ENCODE measurements at regions of chr12 and their contacts with region 1.

Region 1: DNA sequence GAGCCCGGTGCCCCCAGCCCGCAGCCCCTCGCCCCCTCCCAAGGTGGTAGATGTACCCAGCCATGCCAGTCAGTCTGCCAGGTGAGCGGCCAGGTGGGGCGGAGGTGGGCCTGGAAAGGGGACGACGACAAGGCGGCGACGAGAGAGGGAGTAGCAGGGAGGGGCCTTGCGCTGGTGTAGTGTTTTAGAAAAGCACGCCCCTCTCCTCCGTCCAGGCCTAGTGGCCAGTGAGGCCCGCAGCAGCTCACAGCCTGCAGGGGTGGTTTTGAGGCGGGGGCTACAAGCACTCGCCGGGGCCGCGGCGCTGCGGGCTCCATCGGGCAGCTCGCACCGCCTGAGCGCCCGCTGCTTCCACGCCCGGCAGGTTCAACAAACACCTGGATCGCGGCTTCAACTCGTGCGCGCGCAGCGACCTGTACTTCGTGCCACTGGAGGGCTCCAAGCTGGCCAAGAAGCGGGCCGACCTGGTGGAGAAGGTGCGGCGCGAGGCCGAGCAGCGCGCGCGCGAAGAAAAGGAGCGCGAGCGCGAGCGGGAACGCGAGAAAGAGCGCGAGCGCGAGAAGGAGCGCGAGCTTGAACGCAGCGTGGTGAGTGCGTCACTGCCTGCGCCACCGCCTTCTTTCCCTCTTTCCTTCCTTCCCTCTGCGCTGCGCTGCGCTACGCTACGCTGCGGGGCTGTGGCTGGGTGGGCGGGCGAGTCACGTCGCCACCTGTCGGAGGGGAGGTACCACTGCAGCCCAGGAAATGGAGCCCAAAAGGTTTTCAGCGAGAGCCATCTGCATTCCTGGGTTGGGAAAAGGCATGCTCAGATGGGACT is 5.9 kb upstream of the RNU7-1 start:
- DNase-seq: peak; percentile 96
- ATAC-seq: peak; percentile 88
- H3K4me3 Mint-ChIP-seq: peak overlapping the region; percentile 83
- H3K27ac Mint-ChIP-seq: peak overlapping the region; percentile 98
- H3K4me1 Mint-ChIP-seq: peaks cover 54% of the 10 kb centered on the region
- H3K27me3 Mint-ChIP-seq: no peaks in the 10 kb centered on the region
- CTCF ChIP-seq: peak; percentile 89

Region 2: GRCh38 chr12:6778574-6779550 is 158.8 kb before region 1 on chr12:
- CTCF ChIA-PET with region 1: no interaction called
- POLR2A ChIA-PET with region 1: no interaction called
- intact Hi-C with region 1: no loop called
- DNase-seq: peak; percentile 96
- ATAC-seq: peak; percentile 54
- H3K4me3 Mint-ChIP-seq: peak overlapping the region; percentile 89
- H3K27ac Mint-ChIP-seq: peak overlapping the region; percentile 89
- H3K4me1 Mint-ChIP-seq: peaks cover 83% of the 10 kb centered on the region
- H3K27me3 Mint-ChIP-seq: no peaks in the 10 kb centered on the region
- CTCF ChIP-seq: peak; percentile 89

Region 3: DNA sequence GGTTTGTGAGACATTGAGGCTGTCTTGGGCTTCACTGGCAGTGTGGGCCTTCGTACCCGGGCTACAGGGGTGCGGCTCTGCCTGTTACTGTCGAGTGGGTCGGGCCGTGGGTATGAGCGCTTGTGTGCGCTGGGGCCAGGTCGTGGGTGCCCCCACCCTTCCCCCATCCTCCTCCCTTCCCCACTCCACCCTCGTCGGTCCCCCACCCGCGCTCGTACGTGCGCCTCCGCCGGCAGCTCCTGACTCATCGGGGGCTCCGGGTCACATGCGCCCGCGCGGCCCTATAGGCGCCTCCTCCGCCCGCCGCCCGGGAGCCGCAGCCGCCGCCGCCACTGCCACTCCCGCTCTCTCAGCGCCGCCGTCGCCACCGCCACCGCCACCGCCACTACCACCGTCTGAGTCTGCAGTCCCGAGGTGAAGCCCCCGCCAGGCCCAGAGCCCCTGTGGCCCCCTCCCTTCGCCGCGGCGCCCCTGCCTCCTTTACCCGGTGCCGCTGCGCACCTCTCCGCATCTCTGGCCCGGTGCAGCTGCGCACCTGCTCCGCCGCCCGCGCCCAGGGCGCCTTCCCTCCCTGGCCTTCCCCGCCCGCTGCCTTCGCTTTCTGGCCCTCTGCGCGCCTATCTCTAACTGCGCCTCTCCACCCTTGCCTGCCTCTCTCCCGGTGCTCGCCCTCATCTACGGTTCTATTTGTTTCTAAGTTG is 23.3 kb before region 1 on chr12 and contains the start of gene ENO2:
- CTCF ChIA-PET with region 1: interaction called, 6 read pairs
- POLR2A ChIA-PET with region 1: interaction called, 62 read pairs
- intact Hi-C with region 1: no loop called
- DNase-seq: peak; percentile 88
- ATAC-seq: peak; percentile 91
- H3K4me3 Mint-ChIP-seq: peak within 1 kb of the TSS; percentile 95
- H3K27ac Mint-ChIP-seq: peak within 1 kb of the TSS; percentile 90
- H3K4me1 Mint-ChIP-seq: peaks cover 35% of the 10 kb centered on the region
- H3K27me3 Mint-ChIP-seq: no peaks in the 10 kb centered on the region
- CTCF ChIP-seq: no peak
- total RNA-seq, gene ENO2: 315 to 330 TPM

Region 4: DNA sequence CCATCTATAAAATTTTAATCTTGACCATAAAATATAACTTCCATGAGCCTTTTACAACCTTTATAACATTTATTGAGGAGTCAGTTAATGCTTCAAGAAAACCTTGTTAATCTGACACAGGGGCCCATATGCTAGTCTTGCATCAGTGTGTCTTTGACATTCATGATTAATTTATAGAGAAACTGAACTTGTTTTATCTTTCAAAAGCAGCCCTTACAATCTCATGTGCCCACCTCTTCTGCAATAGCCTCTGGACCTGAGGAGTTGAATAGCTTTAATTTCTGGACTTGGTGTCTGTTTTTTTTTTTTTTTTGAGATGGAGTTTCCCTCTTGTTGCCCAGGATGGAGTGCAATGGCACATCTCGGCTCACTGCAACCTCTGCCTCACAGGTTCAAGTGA is 89.2 kb after region 1 on chr12:
- CTCF ChIA-PET with region 1: no interaction called
- POLR2A ChIA-PET with region 1: no interaction called
- intact Hi-C with region 1: no loop called
- DNase-seq: no peak
- ATAC-seq: no peak
- H3K4me3 Mint-ChIP-seq: no peak overlapping the region
- H3K27ac Mint-ChIP-seq: no peak overlapping the region
- H3K4me1 Mint-ChIP-seq: no peaks in the 10 kb centered on the region
- H3K27me3 Mint-ChIP-seq: no peaks in the 10 kb centered on the region
- CTCF ChIP-seq: no peak

Measured in activated CD8-positive, alpha-beta T cell treated with anti-CD3 and anti-CD28 coated beads for 36 hours (primary cell).